ENCODE measurements at regions of chr20 and their contacts with region 1.

Region 1: DNA sequence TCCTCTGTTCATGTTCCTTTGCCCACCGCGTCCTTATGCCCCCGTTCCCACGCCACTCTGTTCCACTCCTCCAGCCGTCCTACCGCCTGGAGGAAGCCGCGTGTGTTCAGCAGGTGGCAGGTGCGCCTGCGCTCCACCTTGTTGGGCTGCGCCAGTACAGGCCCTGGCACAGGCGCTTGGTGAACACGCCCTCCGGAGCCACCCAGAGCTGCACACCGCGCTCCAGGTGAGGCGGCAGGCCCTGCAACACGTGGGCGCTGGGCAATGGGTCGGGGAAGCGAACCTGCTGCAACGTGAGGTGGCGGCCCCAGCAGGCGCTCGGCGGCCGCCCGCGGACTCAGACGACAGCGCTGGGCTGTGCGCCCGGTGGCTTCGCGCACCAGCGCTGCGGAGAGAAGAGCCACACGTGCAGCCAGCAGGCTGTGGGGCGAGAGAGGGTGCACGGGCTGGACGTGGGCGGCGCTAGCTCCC is 4.1 kb upstream of the FOXS1 start:
- DNase-seq: no peak
- CTCF ChIP-seq: no peak

Region 2: DNA sequence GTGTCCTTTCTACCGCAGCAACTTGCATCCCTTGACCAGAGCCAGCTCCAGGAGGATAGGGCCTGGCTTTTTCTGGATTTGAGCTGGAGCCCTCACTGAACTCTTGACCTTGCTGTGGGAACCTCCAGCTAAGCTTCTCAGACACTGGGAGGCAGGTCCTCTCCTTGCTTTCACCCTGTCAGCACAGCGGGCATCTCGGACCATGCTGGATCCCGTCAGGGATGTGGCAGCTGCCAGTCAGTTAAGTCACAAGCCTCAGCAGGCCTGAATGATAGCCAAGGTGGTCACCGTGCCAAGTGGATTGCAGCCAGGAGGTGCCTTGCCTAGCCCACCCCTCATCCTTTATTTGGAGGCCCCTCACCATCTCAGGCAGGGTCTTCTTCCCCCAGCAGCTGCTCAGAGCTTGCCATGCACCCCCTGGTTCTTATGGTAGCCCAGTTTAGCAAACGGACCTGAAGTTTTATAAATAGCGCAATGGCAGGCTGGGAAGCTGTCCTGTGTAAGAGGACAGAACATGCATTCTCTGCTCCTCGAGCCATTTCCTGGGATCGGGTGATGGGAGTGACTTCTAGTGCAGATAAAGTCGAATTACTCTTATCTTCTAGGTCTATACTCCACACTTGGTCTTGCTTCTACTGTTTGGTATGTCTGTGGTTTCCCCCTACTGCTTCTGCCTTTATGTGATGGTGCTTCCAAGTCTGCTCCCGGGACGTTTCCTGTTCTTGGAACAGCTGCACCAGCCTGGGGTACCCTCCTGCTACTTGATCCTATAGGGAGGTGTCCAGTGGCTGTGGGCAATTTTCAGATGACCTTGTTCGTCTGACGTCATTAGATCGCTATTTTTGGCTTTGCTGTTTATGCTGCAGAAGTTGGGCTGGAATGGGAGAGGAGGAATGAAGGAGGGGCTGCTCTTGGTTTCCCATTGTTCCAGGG is 37.4 kb before region 1 on chr20:
- CTCF ChIA-PET with region 1: interaction called, 16 read pairs
- POLR2A ChIA-PET with region 1: no interaction called
- DNase-seq: no peak
- CTCF ChIP-seq: no peak

Region 3: DNA sequence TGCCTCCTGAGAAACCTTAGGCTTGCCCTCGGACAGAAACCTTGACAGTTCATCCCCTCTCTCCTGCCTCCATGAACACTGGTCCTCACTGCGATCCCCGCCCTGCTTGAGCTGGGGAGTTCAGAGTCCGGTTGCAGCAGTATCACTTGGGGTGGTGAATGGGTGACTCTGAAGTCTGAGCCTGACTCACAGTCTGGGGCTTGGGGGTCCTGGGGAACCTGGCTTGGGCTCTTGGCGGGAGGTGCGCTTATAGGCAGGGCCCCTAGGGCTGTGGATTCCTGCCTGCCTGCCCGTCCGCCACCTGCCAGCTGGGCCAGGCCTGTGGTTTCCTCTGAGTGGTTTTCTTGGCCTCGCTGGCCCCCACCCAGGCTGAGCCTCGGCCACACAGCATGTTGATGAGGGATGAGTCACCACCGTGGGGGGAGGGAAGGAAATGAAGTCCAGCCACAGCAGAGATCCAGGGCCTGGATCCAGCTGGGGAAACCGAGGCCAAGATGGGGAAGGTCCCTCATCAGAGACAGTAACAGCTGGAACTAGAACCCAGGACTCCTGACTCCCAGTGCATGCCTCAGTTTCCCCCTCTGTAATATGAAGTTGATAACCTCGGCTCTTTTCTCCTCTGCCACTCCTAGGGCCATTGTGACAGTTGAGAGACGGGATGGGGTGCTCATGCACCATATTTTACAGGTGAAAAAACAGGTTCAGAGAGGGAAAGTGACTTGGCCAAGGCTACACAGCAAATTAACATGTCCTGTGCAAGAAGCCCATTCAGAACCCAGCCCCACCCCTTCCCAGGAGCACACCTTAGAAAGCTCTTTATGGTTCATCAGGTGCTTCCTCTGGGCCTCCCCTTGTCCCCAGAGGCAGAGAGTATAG is 13.3 kb before region 1 on chr20:
- CTCF ChIA-PET with region 1: interaction called, 62 read pairs
- POLR2A ChIA-PET with region 1: no interaction called
- DNase-seq: peak; percentile 71
- CTCF ChIP-seq: no peak

Region 4: DNA sequence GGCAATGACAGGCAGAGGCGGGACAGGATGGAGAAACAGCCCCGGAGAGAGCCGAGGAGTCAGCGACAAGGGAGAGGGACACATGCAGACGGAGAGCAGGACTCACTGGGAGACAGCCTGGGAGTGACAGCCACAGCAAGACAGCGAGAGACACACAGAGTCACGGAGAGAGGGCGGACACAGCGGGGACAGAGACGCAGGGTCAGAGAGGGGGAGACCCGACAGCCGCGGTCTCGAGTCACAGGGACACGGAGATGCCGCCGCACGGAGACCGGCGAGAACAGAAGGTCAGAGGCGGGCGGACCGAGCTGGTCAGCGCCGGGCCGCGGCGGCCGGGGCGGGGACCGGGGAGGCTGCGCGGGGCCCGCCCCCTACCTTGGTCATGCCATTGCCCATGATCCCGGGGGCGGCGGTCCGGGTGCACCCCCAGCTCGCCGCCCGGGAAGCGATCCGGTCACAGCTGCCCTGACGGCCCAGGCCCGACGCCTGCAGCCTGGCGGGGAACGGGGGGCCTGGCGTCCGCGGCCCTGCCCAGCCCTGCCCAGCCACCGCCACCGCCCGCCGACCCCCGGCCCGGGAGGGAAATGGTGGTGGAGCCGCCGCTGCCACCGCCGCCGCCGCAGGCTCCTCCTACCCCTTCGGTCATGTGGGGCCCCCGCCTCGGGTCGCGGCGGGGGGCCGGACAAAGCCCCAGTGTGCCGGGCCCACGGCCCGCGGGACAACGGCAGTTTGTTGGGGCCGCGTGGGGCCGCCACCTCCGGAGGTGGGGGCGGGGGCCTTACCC is 20.6 kb after region 1 on chr20 and contains the starts of genes DUSP15 and TTLL9:
- CTCF ChIA-PET with region 1: interaction called, 54 read pairs
- POLR2A ChIA-PET with region 1: no interaction called
- DNase-seq: no peak
- CTCF ChIP-seq: no peak

Region 5: DNA sequence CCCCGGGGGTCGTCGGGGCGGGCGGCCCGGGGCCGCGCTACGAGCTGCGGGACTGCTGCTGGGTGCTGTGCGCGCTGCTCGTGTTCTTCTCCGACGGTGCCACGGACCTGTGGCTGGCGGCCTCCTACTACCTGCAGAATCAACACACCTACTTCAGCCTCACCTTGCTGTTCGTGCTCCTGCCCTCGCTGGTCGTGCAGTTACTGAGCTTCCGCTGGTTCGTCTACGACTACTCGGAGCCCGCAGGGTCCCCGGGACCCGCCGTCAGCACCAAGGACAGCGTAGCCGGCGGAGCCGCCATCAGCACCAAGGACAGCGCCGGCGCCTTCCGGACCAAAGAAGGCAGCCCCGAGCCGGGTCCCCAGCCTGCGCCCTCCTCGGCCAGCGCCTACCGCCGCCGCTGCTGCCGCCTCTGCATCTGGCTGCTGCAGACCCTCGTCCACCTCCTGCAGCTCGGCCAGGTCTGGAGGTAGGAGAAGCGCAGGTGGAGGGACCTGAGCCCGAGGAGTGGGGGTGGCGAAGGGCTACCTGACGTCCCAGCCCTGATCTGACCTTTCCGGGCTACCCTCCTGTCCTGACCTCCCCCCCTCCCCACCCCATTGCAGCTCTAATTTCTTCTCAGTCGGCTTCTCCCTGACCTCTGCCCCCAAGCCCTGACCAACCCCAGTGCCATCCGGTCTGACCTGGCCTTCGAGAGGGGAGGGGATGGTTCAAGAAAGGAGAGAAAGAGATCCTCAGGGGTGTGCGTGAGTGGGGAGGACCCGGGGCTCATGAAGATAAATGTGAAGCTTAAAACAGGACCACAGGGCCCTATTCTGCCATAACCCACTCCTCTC is 119.0 kb after region 1 on chr20:
- CTCF ChIA-PET with region 1: interaction called, 31 read pairs
- POLR2A ChIA-PET with region 1: no interaction called
- DNase-seq: peak; percentile 93
- CTCF ChIP-seq: no peak

Region 6: DNA sequence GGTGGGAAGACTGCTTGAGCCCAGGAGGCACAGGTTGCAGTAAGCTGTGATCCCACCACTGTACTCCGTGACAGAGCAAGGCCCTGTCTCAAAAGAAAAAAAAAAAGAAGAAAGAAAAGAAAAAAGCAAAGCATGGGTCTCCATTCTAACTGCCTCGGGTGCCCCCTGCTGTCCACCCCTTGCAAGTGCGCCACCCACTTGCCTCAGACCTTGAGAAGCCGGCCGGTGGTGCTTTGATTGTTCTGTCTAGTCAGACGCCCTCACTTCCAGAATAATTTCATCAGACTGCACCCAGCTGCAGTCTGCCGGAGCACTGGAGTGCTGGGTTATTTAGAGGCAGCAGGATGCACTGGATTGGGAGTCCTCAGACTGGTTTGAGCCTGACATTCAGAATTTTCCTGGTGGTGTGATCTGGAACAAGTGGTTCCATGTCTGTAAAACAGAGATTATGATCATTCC is 242.4 kb after region 1 on chr20:
- CTCF ChIA-PET with region 1: interaction called, 34 read pairs
- POLR2A ChIA-PET with region 1: no interaction called
- DNase-seq: peak; percentile 79
- CTCF ChIP-seq: peak; percentile 89